ENCODE measurements at regions of chr17 and their contacts with region 1.

Region 1: DNA sequence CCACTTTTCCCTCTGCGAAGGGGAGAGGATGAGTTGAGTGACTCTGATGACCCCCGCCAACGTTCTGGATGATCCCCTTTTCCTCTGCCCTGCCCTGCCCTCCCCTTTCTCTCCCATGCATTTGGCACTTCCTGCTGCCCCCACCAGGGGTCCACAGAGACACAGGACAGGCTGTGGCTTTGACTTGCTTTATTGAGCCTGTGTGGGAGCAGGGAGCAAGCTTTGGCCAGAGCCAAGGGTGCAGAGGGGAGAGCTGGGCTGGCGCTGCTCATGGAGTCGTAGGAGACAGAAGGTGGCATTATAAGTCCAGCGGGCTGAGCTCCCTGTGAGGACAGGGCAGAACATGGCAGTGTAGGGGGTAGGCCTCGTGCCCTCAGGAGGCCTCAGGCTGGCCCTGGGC is 1.6 kb downstream of the PPY start:
- DNase-seq: no peak
- H3K4me3 Mint-ChIP-seq: no peak overlapping the region
- H3K27ac Mint-ChIP-seq: no peak overlapping the region
- H3K4me1 Mint-ChIP-seq: peaks cover 9% of the 10 kb centered on the region
- H3K27me3 Mint-ChIP-seq: peaks cover 18% of the 10 kb centered on the region

Region 2: GRCh38 chr17:43813386-43813785 is 127.2 kb before region 1 on chr17:
- CTCF ChIA-PET with region 1: no interaction called
- POLR2A ChIA-PET with region 1: no interaction called
- DNase-seq: no peak
- H3K4me3 Mint-ChIP-seq: no peak overlapping the region
- H3K27ac Mint-ChIP-seq: no peak overlapping the region
- H3K4me1 Mint-ChIP-seq: no peaks in the 10 kb centered on the region
- H3K27me3 Mint-ChIP-seq: peaks cover 2% of the 10 kb centered on the region

Region 3: DNA sequence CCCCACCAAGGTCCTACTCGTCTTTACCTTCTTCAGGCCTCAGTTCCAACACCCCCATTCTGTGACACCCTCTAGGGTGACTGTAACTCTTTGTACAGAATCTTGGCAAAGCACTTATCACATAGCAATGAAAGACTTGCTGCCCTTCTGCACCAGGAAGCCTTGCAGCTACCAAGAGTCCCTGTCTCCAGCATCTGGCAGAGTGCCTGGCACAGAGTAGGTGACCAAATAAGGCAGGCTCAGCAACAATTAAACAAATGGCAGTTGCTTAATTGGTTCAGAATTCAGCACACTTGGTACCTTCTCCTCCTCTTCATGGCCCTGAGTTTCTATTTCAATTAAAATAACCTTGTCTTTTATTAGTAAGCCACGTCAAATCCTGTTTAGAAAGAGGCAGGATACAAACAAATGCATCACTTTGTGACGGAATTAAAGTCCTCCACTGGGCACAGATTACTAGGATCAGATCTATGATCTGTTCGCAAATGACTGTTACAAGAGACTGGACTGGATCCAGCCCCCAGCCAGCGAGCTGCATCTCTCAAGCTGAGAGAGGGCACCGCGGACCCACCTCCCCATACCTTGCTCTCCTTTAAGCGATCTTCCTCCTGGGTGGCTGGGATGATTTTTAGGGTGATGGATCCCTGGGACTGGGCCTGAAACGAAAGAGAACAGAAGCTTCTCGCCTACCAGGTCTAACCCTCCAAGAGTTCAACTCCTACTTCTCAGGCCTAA is 117.1 kb before region 1 on chr17:
- CTCF ChIA-PET with region 1: no interaction called
- POLR2A ChIA-PET with region 1: no interaction called
- DNase-seq: no peak
- H3K4me3 Mint-ChIP-seq: no peak overlapping the region
- H3K27ac Mint-ChIP-seq: no peak overlapping the region
- H3K4me1 Mint-ChIP-seq: no peaks in the 10 kb centered on the region
- H3K27me3 Mint-ChIP-seq: no peaks in the 10 kb centered on the region

Region 4: DNA sequence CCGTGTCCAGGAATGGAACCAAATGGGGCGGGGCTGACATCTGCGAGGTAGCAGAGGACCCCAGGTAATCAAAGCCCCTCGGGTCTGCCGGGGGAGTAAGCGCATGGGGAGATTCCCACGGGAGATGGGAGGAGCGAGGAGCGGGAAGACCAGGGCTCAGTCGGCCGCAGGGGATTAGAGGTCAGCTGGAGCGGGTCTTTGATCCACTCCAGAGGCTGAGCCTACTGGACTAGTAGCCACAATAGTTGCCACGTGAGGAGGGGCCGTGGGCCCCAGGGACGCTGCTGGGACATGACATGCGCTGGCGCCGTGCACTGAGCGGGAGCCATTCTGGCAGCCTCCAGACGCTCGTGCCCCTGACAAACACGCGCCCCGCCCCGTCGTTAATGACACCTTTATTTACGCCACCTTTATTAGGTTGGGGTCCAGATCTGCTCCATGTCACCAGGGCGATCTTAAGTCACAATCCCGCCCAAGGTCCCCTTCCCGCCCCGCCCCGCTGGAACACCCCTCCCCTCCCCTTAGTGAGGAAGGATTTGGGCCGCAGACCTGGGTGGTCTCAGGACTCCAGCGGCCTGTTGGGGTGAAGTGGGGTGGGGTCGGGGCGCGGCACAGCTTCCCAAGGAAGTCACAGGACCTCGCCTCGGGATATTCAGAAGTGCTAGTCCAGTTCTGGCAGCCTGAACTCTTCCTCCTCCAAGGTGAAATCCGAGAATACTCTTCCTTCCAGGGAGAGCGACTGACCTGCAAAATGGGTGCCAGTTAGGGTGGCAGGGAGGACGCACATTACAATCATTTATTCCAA is 13.4 kb before region 1 on chr17:
- CTCF ChIA-PET with region 1: interaction called, 24 read pairs
- POLR2A ChIA-PET with region 1: no interaction called
- DNase-seq: no peak
- H3K4me3 Mint-ChIP-seq: peak overlapping the region; percentile 65
- H3K27ac Mint-ChIP-seq: peak overlapping the region; percentile 85
- H3K4me1 Mint-ChIP-seq: peaks cover 22% of the 10 kb centered on the region
- H3K27me3 Mint-ChIP-seq: peaks cover 16% of the 10 kb centered on the region

Region 5: DNA sequence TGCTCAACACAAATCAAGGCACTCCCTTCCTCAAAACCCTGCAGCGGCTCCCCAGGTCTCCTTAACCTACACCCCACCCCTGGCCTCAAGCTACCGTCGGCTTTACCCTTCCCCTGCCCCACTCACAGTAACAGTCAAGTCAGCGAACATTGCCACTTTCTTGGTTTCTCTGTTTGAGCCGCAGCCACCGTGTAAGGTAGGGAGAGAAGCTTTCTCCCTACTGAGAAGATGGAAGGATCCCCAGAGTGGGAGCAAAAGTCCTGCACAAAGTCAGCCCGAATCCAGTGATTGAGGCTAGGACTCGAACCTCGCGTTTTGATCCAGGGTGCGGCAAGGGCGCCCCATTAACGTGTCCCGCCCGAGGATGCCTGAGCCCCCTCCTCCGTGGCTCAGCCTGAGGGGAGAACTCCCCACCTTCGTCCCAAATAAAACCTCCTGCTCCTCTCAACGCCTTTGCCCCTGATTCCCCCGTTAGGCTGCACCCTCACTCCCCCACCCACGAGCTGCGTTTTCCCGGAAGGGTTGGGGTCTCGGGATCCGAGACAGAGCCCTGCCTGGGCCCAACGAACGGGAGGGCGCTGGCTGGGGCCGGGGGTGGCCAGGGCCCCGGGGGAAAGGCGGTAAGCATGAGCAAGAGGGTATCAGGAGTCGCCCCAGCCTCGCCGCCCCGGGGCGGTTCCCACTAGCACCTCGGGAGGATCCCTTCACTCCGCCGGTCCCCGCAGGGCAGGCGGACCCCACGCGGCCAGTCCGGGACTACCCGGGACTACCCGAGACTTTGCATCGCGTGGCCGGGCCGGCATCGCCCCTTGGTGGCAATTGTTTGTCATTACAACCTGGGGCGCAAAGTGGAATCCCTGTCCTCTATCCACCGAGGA is 53.9 kb after region 1 on chr17:
- CTCF ChIA-PET with region 1: interaction called, 33 read pairs
- POLR2A ChIA-PET with region 1: no interaction called
- DNase-seq: peak; percentile 66
- H3K4me3 Mint-ChIP-seq: no peak overlapping the region
- H3K27ac Mint-ChIP-seq: no peak overlapping the region
- H3K4me1 Mint-ChIP-seq: no peaks in the 10 kb centered on the region
- H3K27me3 Mint-ChIP-seq: peaks cover 20% of the 10 kb centered on the region

Region 6: GRCh38 chr17:44044067-44044466 is 103.4 kb after region 1 on chr17:
- CTCF ChIA-PET with region 1: interaction called, 11 read pairs
- POLR2A ChIA-PET with region 1: no interaction called
- DNase-seq: no peak
- H3K4me3 Mint-ChIP-seq: no peak overlapping the region
- H3K27ac Mint-ChIP-seq: no peak overlapping the region
- H3K4me1 Mint-ChIP-seq: peaks cover 24% of the 10 kb centered on the region
- H3K27me3 Mint-ChIP-seq: no peaks in the 10 kb centered on the region

Region 7: DNA sequence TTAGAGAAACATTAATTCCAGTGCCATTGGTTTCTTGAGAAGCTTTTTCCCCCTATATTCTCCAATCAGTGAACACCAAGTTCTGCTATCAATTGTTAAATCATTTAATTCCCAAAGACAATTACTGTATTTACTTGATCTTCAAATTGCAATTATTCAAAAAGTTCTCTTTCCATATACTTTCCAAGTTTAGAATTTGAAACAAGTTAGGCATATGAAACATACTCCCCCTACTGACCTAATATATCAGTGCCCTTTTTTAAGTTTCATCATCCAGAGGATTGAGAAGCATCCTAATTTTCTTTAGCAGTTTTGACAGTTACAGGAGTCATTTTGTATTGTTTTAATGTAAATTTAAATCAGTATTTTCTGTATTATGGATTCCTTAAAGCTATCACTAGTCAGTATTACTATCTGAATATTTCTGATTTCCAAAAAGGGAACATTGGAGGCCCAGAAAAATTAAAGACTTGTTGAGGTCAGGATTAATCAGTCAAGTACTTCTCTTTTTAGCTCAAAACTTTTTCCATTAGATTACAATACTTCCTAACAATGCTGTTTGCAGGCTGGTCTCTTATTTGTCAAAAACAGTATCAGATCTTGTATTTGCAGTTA is 732.0 kb after region 1 on chr17:
- CTCF ChIA-PET with region 1: no interaction called
- POLR2A ChIA-PET with region 1: no interaction called
- DNase-seq: no peak
- H3K4me3 Mint-ChIP-seq: no peak overlapping the region
- H3K27ac Mint-ChIP-seq: no peak overlapping the region
- H3K4me1 Mint-ChIP-seq: no peaks in the 10 kb centered on the region
- H3K27me3 Mint-ChIP-seq: no peaks in the 10 kb centered on the region